Activated CD4-positive, alpha-beta memory T cell treated with anti-CD3 and anti-CD28 coated beads, Interleukin-2, amount 10 ng/mL, durations not matched to agents 7 days and 5 days (primary cell): ENCODE measurements at regions of chrX and their contacts with region 1.

Region 1: DNA sequence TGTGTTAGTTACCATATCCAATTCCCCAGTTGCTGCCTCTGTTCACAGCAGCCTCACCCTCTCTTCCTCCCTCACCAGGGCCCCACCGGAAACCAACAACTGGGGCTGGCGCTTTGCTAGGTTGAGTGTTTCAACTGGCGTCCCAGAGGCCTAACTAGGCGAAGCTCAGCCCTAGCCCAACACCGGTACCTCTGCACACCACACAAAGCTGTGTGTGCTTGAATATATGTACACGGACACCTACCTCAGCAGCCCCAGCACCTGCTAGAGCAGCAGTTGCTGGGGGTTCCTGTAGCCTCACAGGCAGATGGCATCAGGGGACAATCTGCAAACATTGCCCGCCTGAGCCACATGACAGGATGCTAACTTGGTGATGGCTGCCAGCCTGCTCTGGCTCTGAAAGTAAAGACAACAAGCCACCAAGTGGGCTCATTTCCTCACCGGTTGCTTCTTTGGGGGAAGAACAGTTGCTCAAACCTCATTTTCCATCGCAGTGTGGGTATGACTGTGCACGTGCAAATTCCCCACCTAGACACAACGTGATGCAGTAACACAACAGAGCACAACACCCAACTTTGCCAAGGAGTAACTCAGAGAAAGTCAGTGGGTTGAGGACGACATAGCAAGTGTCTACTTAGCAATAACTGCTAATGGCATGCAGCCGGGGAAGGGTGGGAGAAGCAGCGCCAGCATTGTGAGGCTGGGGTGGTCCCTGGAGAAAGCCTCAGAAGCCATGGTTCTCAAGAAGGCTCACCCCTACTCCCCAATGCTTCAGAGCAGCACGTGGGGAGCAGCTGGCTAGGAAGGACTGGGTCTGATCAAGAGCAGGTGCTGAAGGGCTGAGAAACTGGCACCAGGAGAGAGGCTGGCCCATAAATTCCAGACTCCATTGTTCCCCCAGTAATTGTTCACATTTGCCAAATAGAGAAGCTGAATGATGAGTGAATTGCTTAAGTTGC is 139.5 kb downstream of the SH3KBP1 start:
- DNase-seq: peak; percentile 86
- H3K4me3 Mint-ChIP-seq: peak overlapping the region; percentile 60
- H3K27ac Mint-ChIP-seq: peak overlapping the region; percentile 99
- H3K4me1 Mint-ChIP-seq: peaks cover 97% of the 10 kb centered on the region
- H3K27me3 Mint-ChIP-seq: no peaks in the 10 kb centered on the region

Region 2: DNA sequence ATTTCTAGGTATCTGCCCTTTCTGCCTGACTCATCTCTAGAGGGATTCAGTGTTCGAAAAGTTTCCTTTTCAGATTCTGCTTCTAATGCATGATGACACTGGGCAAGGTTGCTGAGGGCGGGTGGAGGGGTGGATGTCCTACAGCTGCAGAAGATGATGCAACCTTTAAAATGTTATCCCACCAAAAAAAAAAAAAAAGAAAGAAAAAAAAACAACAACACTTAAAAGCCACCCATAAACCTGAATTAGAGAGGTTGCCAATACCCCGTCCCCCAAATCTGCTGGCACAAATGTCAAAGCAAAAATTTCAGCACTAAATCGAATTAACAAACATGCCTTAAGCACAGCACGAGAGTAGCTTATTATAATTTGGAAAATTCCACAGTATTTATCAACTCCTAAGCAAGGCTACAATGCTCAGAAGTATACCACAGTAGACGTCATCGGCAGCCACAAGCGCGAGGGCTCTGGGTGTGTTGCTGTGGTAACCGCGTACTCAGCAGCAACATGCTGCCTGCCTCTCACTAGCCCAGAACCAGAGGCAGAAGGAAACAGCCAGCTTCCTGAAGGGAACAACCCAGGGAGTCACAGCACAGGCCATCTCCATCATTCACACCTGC is 65.1 kb before region 1 on chrX:
- CTCF ChIA-PET with region 1: interaction called, 3 read pairs
- POLR2A ChIA-PET with region 1: interaction called, 10 read pairs
- DNase-seq: peak; percentile 85
- H3K4me3 Mint-ChIP-seq: peak overlapping the region; percentile 70
- H3K27ac Mint-ChIP-seq: peak overlapping the region; percentile 98
- H3K4me1 Mint-ChIP-seq: peaks cover 85% of the 10 kb centered on the region
- H3K27me3 Mint-ChIP-seq: no peaks in the 10 kb centered on the region

Region 3: GRCh38 chrX:19772826-19773628 is 25.1 kb after region 1 on chrX:
- CTCF ChIA-PET with region 1: interaction called, 4 read pairs
- POLR2A ChIA-PET with region 1: interaction called, 19 read pairs
- DNase-seq: no peak
- H3K4me3 Mint-ChIP-seq: peak overlapping the region; percentile 18
- H3K27ac Mint-ChIP-seq: peak overlapping the region; percentile 71
- H3K4me1 Mint-ChIP-seq: peaks cover 75% of the 10 kb centered on the region
- H3K27me3 Mint-ChIP-seq: no peaks in the 10 kb centered on the region

Region 4: GRCh38 chrX:19799319-19800182 is 51.6 kb after region 1 on chrX:
- CTCF ChIA-PET with region 1: no interaction called
- POLR2A ChIA-PET with region 1: interaction called, 58 read pairs
- DNase-seq: peak; percentile 62
- H3K4me3 Mint-ChIP-seq: peak overlapping the region; percentile 90
- H3K27ac Mint-ChIP-seq: peak overlapping the region; percentile 98
- H3K4me1 Mint-ChIP-seq: peaks cover 59% of the 10 kb centered on the region
- H3K27me3 Mint-ChIP-seq: no peaks in the 10 kb centered on the region

Region 5: DNA sequence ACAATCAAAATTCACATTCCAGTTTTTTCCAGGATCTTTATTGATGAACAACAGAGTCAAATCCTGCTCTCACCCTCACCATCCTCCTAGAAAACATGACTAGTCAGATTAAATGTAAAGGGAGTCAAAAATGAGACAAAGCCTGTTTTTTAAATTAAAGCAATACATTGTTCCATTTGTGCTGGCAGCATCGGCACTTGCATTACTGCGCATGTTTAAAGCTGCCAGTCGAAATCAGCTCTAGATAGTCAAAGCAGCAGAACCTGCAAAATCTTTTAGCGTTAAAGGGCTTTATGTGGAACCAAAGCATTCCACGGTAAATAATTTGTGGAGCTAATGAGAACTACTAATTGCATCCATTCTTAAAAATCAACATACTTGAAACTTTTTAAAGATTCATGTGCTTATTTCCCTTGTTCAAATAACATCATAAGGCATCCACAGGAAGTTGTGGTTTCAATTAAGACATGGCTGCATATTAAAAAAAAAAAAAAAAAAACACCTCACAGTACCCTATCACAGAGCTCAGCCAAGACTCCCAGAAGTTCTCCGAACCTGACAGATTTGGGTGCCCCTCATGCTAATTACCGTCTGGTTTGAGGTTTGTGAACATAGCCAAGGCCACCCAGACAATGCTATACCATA is 57.2 kb after region 1 on chrX:
- CTCF ChIA-PET with region 1: no interaction called
- POLR2A ChIA-PET with region 1: interaction called, 58 read pairs
- DNase-seq: no peak
- H3K4me3 Mint-ChIP-seq: peak overlapping the region; percentile 30
- H3K27ac Mint-ChIP-seq: peak overlapping the region; percentile 54
- H3K4me1 Mint-ChIP-seq: peaks cover 62% of the 10 kb centered on the region
- H3K27me3 Mint-ChIP-seq: no peaks in the 10 kb centered on the region

Region 6: GRCh38 chrX:19840899-19841648 is 93.1 kb after region 1 on chrX:
- CTCF ChIA-PET with region 1: interaction called, 3 read pairs
- POLR2A ChIA-PET with region 1: interaction called, 19 read pairs
- DNase-seq: peak; percentile 70
- H3K4me3 Mint-ChIP-seq: peak overlapping the region; percentile 54
- H3K27ac Mint-ChIP-seq: peak overlapping the region; percentile 91
- H3K4me1 Mint-ChIP-seq: peaks cover 71% of the 10 kb centered on the region
- H3K27me3 Mint-ChIP-seq: no peaks in the 10 kb centered on the region

Region 7: GRCh38 chrX:19887911-19888879 is 140.3 kb after region 1 on chrX:
- CTCF ChIA-PET with region 1: interaction called, 13 read pairs
- POLR2A ChIA-PET with region 1: interaction called, 4 read pairs
- DNase-seq: peak; percentile 38
- H3K4me3 Mint-ChIP-seq: peak overlapping the region; percentile 75
- H3K27ac Mint-ChIP-seq: peak overlapping the region; percentile 69
- H3K4me1 Mint-ChIP-seq: peaks cover 50% of the 10 kb centered on the region
- H3K27me3 Mint-ChIP-seq: no peaks in the 10 kb centered on the region

Region 8: GRCh38 chrX:20128670-20129069 is 380.7 kb after region 1 on chrX:
- CTCF ChIA-PET with region 1: no interaction called
- POLR2A ChIA-PET with region 1: no interaction called
- DNase-seq: no peak
- H3K4me3 Mint-ChIP-seq: no peak overlapping the region
- H3K27ac Mint-ChIP-seq: no peak overlapping the region
- H3K4me1 Mint-ChIP-seq: no peaks in the 10 kb centered on the region
- H3K27me3 Mint-ChIP-seq: no peaks in the 10 kb centered on the region